ENCODE measurements at regions of chr15 and their contacts with region 1.

Region 1: GRCh38 chr15:72231066-72231846 is at the start of gene PKM:
- DNase-seq: peak; percentile 98
- ATAC-seq: peak; percentile 94
- H3K4me3 ChIP-seq: peak within 1 kb of the TSS; percentile 46 to 81
- H3K27ac ChIP-seq: peak within 1 kb of the TSS; percentile 95 to 98
- H3K4me1 ChIP-seq: no peaks in the 10 kb centered on the region
- H3K27me3 ChIP-seq: no peaks in the 10 kb centered on the region
- total RNA-seq, gene PKM: 478 to 588 TPM

Region 2: GRCh38 chr15:72272213-72273002 is 41.2 kb after region 1 on chr15 and contains the start of gene PARP6:
- intact Hi-C with region 1: loop called (anchors 2 kb)
- DNase-seq: peak; percentile 100
- ATAC-seq: peak; percentile 100
- H3K4me3 ChIP-seq: peak within 1 kb of the TSS; percentile 73 to 94
- H3K27ac ChIP-seq: peak within 1 kb of the TSS; percentile 7 to 37
- H3K4me1 ChIP-seq: no peaks in the 10 kb centered on the region
- H3K27me3 ChIP-seq: no peaks in the 10 kb centered on the region
- total RNA-seq, gene PARP6: 63.1 to 72.2 TPM